IMR-90 (cell line): ENCODE measurements at regions of chr7 and their contacts with region 1.

Region 1: GRCh38 chr7:103593691-103594090 is 147.7 kb upstream of the SLC26A5 start:
- DNase-seq: peak; percentile 13
- ATAC-seq: peak; percentile 27; the same call in 1 of the 2 replicates
- H3K4me3 ChIP-seq: no peak overlapping the region
- H3K27ac ChIP-seq: no peak overlapping the region
- H3K4me1 ChIP-seq: peaks cover 2% of the 10 kb centered on the region; the same call in 1 of the 2 replicates
- H3K27me3 ChIP-seq: no peaks in the 10 kb centered on the region
- CTCF ChIP-seq: no peak
- POLR2A ChIP-seq: no peak
- RAD21 ChIP-seq: no peak

Region 2: GRCh38 chr7:103651593-103652377 is 58.1 kb after region 1 on chr7:
- CTCF ChIA-PET with region 1: no interaction called
- POLR2A ChIA-PET with region 1: no interaction called
- dilution Hi-C with region 1: no loop called
- in situ Hi-C with region 1: no loop called
- intact Hi-C with region 1: no loop called
- DNase-seq: no peak
- ATAC-seq: no peak
- H3K4me3 ChIP-seq: no peak overlapping the region
- H3K27ac ChIP-seq: no peak overlapping the region
- H3K4me1 ChIP-seq: no peaks in the 10 kb centered on the region
- H3K27me3 ChIP-seq: no peaks in the 10 kb centered on the region
- CTCF ChIP-seq: no peak
- POLR2A ChIP-seq: no peak
- RAD21 ChIP-seq: no peak

Region 3: GRCh38 chr7:103989785-103990767 is 396.4 kb after region 1 on chr7:
- CTCF ChIA-PET with region 1: no interaction called
- POLR2A ChIA-PET with region 1: no interaction called
- dilution Hi-C with region 1: no loop called
- in situ Hi-C with region 1: no loop called
- intact Hi-C with region 1: loop called (anchors 5 kb)
- DNase-seq: peak; percentile 47
- ATAC-seq: peak; percentile 65
- H3K4me3 ChIP-seq: peak overlapping the region; percentile 78
- H3K27ac ChIP-seq: peak overlapping the region; percentile 66
- H3K4me1 ChIP-seq: peaks cover 5% of the 10 kb centered on the region; the same call in 1 of the 2 replicates
- H3K27me3 ChIP-seq: no peaks in the 10 kb centered on the region; the same call in 1 of the 2 replicates
- CTCF ChIP-seq: 0 out of 2 replicates have a peak, but pooled peaks have one; percentile 5
- POLR2A ChIP-seq: no peak
- RAD21 ChIP-seq: no peak